Activated CD8-positive, alpha-beta T cell treated with anti-CD3 and anti-CD28 coated beads, Interleukin-2, amount 10 ng/mL, durations not matched to agents 7 days and 5 days (primary cell): ENCODE measurements at regions of chr12 and their contacts with region 1.

Region 1: DNA sequence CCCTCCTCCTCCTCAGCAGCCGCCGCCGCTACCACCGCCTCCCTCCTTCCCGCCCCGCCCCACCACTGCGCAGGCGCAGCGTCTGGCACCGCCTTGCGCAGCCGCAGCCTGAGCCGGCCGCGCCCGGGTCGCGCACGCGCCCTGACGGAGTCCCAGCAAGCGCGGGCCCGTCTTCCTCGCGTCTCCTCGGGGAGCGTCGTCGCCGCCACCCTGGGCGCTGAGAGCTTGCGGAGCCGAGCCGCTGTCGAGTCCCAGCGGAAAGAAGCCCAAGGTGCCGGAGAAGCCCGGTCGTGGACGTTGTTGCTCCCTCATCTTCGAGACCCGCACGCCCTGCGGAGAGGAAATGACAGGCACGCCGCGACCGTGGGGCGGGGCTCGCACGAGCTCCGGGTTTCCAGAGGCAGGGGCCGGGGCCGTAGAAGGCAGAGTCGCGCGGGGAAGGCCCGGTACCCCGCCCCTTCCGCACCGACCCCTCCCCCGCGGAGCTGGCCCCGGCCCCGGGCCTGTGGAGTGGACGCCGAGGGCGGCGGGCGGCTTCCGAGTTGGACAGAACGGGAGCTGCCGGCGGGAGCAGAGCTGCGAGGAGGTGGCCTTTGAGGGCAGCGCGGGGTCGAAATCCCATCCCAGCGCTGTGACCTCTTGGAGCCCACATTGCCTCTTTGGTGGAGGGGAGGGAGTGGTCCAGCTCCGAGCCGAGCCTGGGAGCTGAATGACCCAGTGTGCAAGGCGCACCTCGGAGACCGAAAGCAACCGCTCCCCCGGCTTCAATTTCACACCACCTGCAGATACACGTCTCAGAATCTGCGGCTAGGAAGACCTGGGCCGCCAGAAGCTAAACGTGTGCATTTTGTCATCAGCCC is 469 bp upstream of the RAB35 start:
- DNase-seq: peak; percentile 98
- ATAC-seq: peak; percentile 83
- H3K4me3 Mint-ChIP-seq: peak overlapping the region; percentile 81
- H3K27ac Mint-ChIP-seq: peak overlapping the region; percentile 78
- H3K4me1 Mint-ChIP-seq: peaks cover 78% of the 10 kb centered on the region
- H3K27me3 Mint-ChIP-seq: no peaks in the 10 kb centered on the region

Region 2: GRCh38 chr12:120200364-120200800 is 83.4 kb after region 1 on chr12:
- CTCF ChIA-PET with region 1: interaction called, 28 read pairs
- POLR2A ChIA-PET with region 1: interaction called, 82 read pairs
- DNase-seq: no peak
- ATAC-seq: no peak
- H3K4me3 Mint-ChIP-seq: peak overlapping the region; percentile 89
- H3K27ac Mint-ChIP-seq: peak overlapping the region; percentile 98
- H3K4me1 Mint-ChIP-seq: peaks cover 46% of the 10 kb centered on the region
- H3K27me3 Mint-ChIP-seq: no peaks in the 10 kb centered on the region

Region 3: GRCh38 chr12:120562906-120563305 is 445.9 kb after region 1 on chr12:
- CTCF ChIA-PET with region 1: no interaction called
- POLR2A ChIA-PET with region 1: no interaction called
- DNase-seq: no peak
- ATAC-seq: no peak
- H3K4me3 Mint-ChIP-seq: no peak overlapping the region
- H3K27ac Mint-ChIP-seq: peak overlapping the region; percentile 37
- H3K4me1 Mint-ChIP-seq: no peaks in the 10 kb centered on the region
- H3K27me3 Mint-ChIP-seq: no peaks in the 10 kb centered on the region